Aorta (tissue), 5 donors: ENCODE measurements at regions of chr13 and their contacts with region 1.

Region 1: GRCh38 chr13:30865123-30866049 is 40.7 kb upstream of the MEDAG start:
- DNase-seq: peak; percentile 87 to 89
- ATAC-seq: peak; percentile 93
- H3K4me3 ChIP-seq: no peak overlapping the region
- H3K27ac ChIP-seq: peak overlapping the region; percentile 56 to 81
- H3K4me1 ChIP-seq: peaks cover 2 to 3% of the 10 kb centered on the region in 2 donors
- H3K27me3 ChIP-seq: no peaks in the 10 kb centered on the region

Region 2: DNA sequence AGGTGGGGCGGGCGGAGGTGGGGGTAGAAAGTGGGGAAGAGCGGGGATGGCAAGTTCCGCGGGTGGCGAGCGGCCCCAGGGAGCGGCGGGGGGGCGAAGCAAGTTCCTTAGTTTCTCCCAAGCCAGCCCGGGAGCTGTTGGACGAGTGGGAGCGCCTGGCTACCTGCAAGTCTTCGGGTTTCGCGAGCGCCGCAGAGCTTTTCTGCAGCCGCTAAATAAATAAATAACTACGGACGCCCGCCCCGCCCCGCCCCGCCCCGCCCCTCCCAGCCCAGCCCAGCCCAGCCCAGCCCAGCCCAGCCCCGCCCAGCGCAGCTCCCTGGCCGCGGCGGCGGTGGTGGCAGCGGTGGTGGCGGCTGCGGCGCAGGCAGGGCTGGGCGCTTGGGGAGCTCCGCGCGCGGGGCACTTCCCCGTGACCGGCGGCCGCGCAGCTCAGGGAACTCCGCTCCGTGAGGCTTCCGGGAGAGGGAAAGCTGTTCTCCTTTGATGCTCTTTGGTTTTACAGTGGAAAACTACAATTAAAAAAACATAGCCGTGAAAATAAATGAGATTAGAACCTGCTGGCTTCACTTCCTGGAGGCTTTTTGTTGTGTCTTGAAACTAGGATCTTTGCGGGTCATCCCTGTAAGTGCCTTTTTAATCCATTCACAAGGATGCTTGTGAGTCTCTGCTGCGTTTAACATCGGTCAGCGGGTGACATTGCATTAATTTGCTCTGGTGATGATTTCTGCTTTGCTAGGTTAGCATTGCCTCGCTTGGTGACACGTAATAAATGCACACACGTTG is 443.1 kb before region 1 on chr13 and contains the start of gene UBE2L5:
- intact Hi-C with region 1: loop called in 1 of 2 experiments (anchors 10 kb)
- DNase-seq: peak; percentile 85 to 92
- ATAC-seq: peak; percentile 92
- H3K4me3 ChIP-seq: peak within 1 kb of the TSS; percentile 73 to 92
- H3K27ac ChIP-seq: peak within 1 kb of the TSS; percentile 94 to 95
- H3K4me1 ChIP-seq: no peaks in the 10 kb centered on the region
- H3K27me3 ChIP-seq: no peaks in the 10 kb centered on the region
- total RNA-seq, gene UBE2L5: 1.7 TPM in 1 of 2 donors, not detected in the other

Region 3: GRCh38 chr13:30673669-30674521 is 191.5 kb before region 1 on chr13:
- intact Hi-C with region 1: loop called in 1 of 2 experiments (anchors 5 kb)
- DNase-seq: peak; percentile 94 to 96
- ATAC-seq: peak; percentile 96
- H3K4me3 ChIP-seq: peak overlapping the region; percentile 0 to 16
- H3K27ac ChIP-seq: peak overlapping the region in 1 of 2 donors; percentile 62
- H3K4me1 ChIP-seq: no peaks in the 10 kb centered on the region
- H3K27me3 ChIP-seq: no peaks in the 10 kb centered on the region

Region 4: GRCh38 chr13:30847650-30848307 is 17.6 kb before region 1 on chr13:
- intact Hi-C with region 1: loop called in 1 of 2 experiments (anchors 2 kb)
- DNase-seq: peak in 1 of 2 donors; percentile 71
- ATAC-seq: peak; percentile 79
- H3K4me3 ChIP-seq: no peak overlapping the region
- H3K27ac ChIP-seq: peak overlapping the region; percentile 29 to 73
- H3K4me1 ChIP-seq: no peaks in the 10 kb centered on the region
- H3K27me3 ChIP-seq: no peaks in the 10 kb centered on the region

Region 5: GRCh38 chr13:30880856-30881155 is 15.4 kb after region 1 on chr13:
- intact Hi-C with region 1: loop called in 1 of 2 experiments (anchors 2 kb)
- DNase-seq: no peak
- ATAC-seq: peak; percentile 92
- H3K4me3 ChIP-seq: no peak overlapping the region
- H3K27ac ChIP-seq: peak overlapping the region; percentile 96 to 97
- H3K4me1 ChIP-seq: peaks cover 2 to 21% of the 10 kb centered on the region in 2 donors
- H3K27me3 ChIP-seq: no peaks in the 10 kb centered on the region

Region 6: DNA sequence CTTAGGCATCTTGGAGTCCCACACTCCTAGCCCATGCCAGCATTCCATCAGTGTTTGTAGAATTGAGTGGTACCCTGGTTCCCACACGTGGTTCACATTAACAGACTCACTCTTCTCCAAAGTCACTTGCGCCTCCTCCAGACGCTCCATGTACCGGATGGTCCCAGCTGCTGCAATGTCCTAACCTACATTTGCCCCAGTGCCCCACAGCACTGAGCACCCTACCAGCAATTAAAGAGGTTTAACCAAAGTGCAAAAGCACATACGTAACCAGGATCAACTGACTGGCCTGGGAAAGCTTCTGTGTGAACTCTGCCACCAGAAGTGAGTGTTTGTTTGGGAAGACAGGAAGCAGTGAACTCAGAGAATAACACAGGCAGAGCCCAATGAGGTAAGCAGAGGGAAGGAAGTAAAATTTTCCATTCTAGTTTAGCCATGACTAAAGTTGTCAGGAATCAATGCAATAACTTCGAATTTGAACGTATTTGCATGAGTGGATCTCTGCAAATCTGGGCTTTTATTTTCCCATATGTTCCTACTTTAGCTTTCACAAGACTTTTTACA is 33.4 kb after region 1 on chr13:
- intact Hi-C with region 1: loop called in 1 of 2 experiments (anchors 2 kb)
- DNase-seq: peak; percentile 57 to 79
- ATAC-seq: peak; percentile 85
- H3K4me3 ChIP-seq: no peak overlapping the region
- H3K27ac ChIP-seq: peak overlapping the region; percentile 81 to 99
- H3K4me1 ChIP-seq: peaks cover 15 to 19% of the 10 kb centered on the region in 2 donors
- H3K27me3 ChIP-seq: no peaks in the 10 kb centered on the region

Region 7: GRCh38 chr13:30905932-30906383 is 40.6 kb after region 1 on chr13 and contains the start of gene MEDAG:
- intact Hi-C with region 1: loop called in 1 of 2 experiments (anchors 5 kb)
- DNase-seq: peak; percentile 92 to 96
- ATAC-seq: peak; percentile 92
- H3K4me3 ChIP-seq: peak within 1 kb of the TSS; percentile 37 to 49
- H3K27ac ChIP-seq: peak within 1 kb of the TSS; percentile 79 to 90
- H3K4me1 ChIP-seq: peaks cover 0 to 8% of the 10 kb centered on the region in 2 donors
- H3K27me3 ChIP-seq: no peaks in the 10 kb centered on the region
- total RNA-seq, gene MEDAG: 146 to 188 TPM

Region 8: GRCh38 chr13:30932481-30933353 is 67.3 kb after region 1 on chr13 and contains the start of gene TEX26:
- intact Hi-C with region 1: no loop called
- DNase-seq: peak; percentile 63 to 82
- ATAC-seq: peak; percentile 60
- H3K4me3 ChIP-seq: no peak within 1 kb of the TSS
- H3K27ac ChIP-seq: no peak within 1 kb of the TSS
- H3K4me1 ChIP-seq: no peaks in the 10 kb centered on the region
- H3K27me3 ChIP-seq: no peaks in the 10 kb centered on the region
- total RNA-seq, gene TEX26: 0.24 TPM in 1 of 2 donors, not detected in the other